ENCODE measurements at regions of chr19 and their contacts with region 1.

Region 1: DNA sequence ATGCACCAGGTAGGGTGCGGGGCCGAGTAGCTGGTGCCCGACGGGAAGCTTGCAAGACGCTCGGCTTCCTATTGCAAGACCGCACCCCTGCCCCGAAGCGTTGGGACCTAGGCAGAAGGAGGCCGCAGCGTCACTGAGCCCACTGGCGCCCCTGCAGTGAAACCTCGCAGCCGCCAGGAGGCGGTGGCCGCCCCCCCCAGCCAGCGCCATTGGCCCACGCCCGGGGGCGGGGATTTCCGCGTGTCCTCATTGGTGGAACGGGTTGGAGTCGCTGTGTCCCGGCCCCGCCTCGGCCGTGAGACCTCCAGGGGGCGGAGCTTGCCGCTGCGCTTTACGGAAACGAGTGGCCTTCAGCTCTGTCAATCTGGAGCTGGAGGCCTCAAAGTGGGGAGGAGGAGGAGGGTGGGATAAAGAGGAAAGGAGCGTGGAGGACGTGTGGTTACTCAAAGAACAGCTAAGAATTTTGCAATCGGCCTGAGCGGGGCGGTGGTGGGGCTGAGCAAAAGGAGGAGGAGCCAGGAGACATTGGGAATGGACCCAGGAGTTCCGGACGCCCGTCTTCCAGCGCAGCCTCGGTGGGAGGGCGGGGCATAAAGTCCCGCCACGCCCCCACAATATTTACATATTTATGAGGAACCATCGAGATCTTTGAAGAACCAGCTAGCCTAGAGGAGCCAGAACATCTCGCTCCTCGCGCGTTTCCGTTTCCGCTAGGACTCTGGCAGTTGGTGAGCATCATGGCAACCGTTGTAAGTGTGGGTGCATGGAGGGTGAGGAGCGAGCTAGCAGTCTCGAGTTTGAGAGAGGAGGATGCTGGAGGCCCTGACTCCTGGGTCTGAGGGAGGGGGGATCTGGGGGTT is at the starts of genes GYS1 and RUVBL2:
- DNase-seq: peak; percentile 96 to 100 (median 99)
- ATAC-seq: peak; percentile 95
- H3K4me3 ChIP-seq: peak within 1 kb of the TSS; percentile 70
- H3K4me3 Mint-ChIP-seq: peak within 1 kb of the TSS; percentile 95 to 100 (median 96)
- H3K27ac ChIP-seq: peak within 1 kb of the TSS; percentile 80
- H3K27ac Mint-ChIP-seq: peak within 1 kb of the TSS; percentile 89 to 99 (median 97)
- H3K4me1 ChIP-seq: peaks cover 23 to 24% of the 10 kb centered on the region in 2 donors
- H3K4me1 Mint-ChIP-seq: peaks cover 40 to 59% (median 46%) of the 10 kb centered on the region in 7 donors
- H3K27me3 ChIP-seq: no peaks in the 10 kb centered on the region
- H3K27me3 Mint-ChIP-seq: no peaks in the 10 kb centered on the region
- total RNA-seq, gene GYS1: 27.3 to 82.3 (median 50.7) TPM
- total RNA-seq, gene RUVBL2: 23.4 to 94.0 (median 24.1) TPM

Region 2: DNA sequence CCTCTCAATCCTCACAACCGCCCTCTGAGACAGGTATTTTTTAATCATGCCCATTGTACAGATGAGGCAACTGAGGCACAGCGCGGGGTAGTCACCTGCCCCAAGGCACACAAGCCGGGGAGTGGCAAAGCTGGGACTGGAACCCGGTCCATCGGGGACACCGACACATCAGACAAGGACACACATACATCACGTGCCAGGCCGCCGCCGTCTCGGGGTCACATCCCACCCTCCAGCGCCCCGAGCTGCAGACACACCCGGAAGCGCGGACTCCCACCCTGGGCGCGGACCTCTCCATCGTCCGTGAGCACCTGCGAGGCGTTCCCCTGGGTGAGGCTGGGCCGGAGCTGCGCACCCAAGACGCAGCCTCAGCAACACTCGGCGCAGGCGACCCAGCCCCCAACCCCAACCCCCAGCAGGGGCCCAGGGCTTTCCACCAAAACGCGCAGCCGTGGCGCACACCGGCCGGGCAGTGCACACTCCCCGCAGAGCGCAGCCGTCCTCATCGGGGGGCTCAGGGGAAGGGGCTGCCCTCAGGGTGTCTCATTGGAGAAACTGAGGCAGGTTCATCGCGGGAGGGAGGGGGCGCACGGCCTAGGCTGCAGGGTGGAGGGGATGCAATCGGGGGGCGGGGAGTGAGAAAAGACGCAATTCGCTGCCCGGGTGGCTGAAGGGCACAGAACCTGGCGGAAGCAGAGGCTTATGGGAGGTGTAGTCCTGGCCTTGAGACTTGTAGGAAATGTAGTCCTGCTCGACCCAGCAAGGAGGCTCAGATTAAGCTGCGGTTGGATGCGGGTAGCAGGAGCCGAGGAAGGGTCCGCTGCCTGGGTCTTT is 479.9 kb before region 1 on chr19:
- CTCF ChIA-PET with region 1: no interaction called
- POLR2A ChIA-PET with region 1: no interaction called
- intact Hi-C with region 1: loop called in 1 of 2 experiments (anchors 2 kb)
- DNase-seq: peak in 8 of 9 donors; percentile 69 to 84 (median 78)
- ATAC-seq: peak; percentile 77
- H3K4me3 ChIP-seq: peak overlapping the region; percentile 72
- H3K4me3 Mint-ChIP-seq: no peak overlapping the region
- H3K27ac ChIP-seq: peak overlapping the region; percentile 82
- H3K27ac Mint-ChIP-seq: peak overlapping the region in 3 of 9 donors; percentile 68 to 91 (median 90)
- H3K4me1 ChIP-seq: peaks cover 21 to 22% of the 10 kb centered on the region in 2 donors
- H3K4me1 Mint-ChIP-seq: peaks cover 11 to 18% (median 13%) of the 10 kb centered on the region in 7 donors
- H3K27me3 ChIP-seq: no peaks in the 10 kb centered on the region
- H3K27me3 Mint-ChIP-seq: no peaks in the 10 kb centered on the region

Region 3: GRCh38 chr19:48872182-48872883 is 121.1 kb before region 1 on chr19 and contains the start of gene PPP1R15A:
- CTCF ChIA-PET with region 1: no interaction called
- POLR2A ChIA-PET with region 1: interaction called, 12 read pairs
- intact Hi-C with region 1: loop called (anchors 1 kb)
- DNase-seq: peak; percentile 96 to 99 (median 98)
- ATAC-seq: peak; percentile 58
- H3K4me3 ChIP-seq: peak within 1 kb of the TSS; percentile 86
- H3K4me3 Mint-ChIP-seq: peak within 1 kb of the TSS; percentile 94 to 100 (median 98)
- H3K27ac ChIP-seq: peak within 1 kb of the TSS; percentile 99
- H3K27ac Mint-ChIP-seq: peak within 1 kb of the TSS; percentile 94 to 100 (median 99)
- H3K4me1 ChIP-seq: peaks cover 34 to 36% of the 10 kb centered on the region in 2 donors
- H3K4me1 Mint-ChIP-seq: peaks cover 31 to 51% (median 41%) of the 10 kb centered on the region in 7 donors
- H3K27me3 ChIP-seq: no peaks in the 10 kb centered on the region
- H3K27me3 Mint-ChIP-seq: peaks cover 0 to 14% (median 0%) of the 10 kb centered on the region in 5 donors
- total RNA-seq, gene PPP1R15A: 31.5 to 1,030 (median 71.9) TPM

Region 4: GRCh38 chr19:49017666-49018351 is 24.4 kb after region 1 on chr19:
- CTCF ChIA-PET with region 1: interaction called, 4 read pairs
- POLR2A ChIA-PET with region 1: interaction called, 10 read pairs
- intact Hi-C with region 1: loop called (anchors 2 kb)
- DNase-seq: peak; percentile 49 to 71 (median 67)
- ATAC-seq: peak; percentile 91
- H3K4me3 ChIP-seq: peak overlapping the region; percentile 76
- H3K4me3 Mint-ChIP-seq: peak overlapping the region; percentile 78 to 95 (median 90)
- H3K27ac ChIP-seq: peak overlapping the region; percentile 48
- H3K27ac Mint-ChIP-seq: peak overlapping the region in 3 of 9 donors; percentile 28 to 45 (median 42)
- H3K4me1 ChIP-seq: peaks cover 0 to 4% of the 10 kb centered on the region in 2 donors
- H3K4me1 Mint-ChIP-seq: peaks cover 7 to 22% (median 18%) of the 10 kb centered on the region in 7 donors
- H3K27me3 ChIP-seq: no peaks in the 10 kb centered on the region
- H3K27me3 Mint-ChIP-seq: peaks cover 0 to 22% (median 0%) of the 10 kb centered on the region in 5 donors

Region 5: DNA sequence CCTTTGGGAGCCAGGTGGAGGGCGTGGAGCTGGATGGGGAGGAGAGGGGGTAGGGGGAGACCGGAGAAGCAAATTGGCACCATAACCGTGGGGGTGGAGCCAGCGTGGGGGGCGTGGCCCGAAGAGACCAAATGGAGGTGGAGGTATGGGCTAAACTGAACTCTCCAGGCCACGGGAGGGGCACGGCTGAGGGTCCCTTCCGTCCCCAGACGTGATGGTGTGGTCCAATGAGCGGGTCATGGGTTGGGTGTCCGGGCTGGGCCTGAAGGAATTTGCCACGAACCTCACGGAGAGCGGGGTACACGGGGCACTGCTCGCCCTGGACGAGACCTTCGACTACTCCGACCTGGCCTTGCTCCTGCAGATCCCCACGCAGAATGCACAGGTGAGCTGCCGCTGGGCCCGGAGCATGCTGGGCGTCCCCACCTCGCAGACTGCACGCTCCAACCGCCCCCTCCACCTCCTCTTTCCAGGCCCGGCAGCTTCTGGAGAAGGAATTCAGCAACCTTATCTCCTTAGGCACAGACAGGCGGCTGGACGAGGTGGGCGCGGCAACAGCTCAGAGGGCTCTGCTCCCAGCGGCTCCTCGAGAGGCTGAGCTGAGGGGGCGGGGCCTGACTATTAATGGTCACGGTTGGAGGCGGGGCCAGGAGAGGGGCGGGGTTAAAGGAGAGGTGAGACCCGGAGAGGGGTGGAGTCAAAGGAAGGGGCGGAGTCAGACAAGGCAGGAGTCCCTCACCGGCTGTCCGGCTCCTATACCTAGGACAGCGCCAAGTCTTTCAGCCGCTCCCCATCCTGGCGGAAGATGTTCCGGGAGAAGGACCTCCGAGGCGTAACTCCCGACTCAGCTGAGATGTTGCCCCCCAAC is 155.6 kb after region 1 on chr19:
- CTCF ChIA-PET with region 1: interaction called, 6 read pairs
- POLR2A ChIA-PET with region 1: no interaction called
- intact Hi-C with region 1: loop called (anchors 1 to 5 kb)
- DNase-seq: peak; percentile 39 to 83 (median 59)
- ATAC-seq: peak; percentile 75
- H3K4me3 ChIP-seq: peak overlapping the region; percentile 52
- H3K4me3 Mint-ChIP-seq: peak overlapping the region; percentile 32 to 88 (median 76)
- H3K27ac ChIP-seq: no peak overlapping the region
- H3K27ac Mint-ChIP-seq: no peak overlapping the region
- H3K4me1 ChIP-seq: peaks cover 8 to 35% of the 10 kb centered on the region in 2 donors
- H3K4me1 Mint-ChIP-seq: peaks cover 16 to 43% (median 35%) of the 10 kb centered on the region in 7 donors
- H3K27me3 ChIP-seq: peaks cover 8 to 29% of the 10 kb centered on the region in 2 donors
- H3K27me3 Mint-ChIP-seq: peaks cover 59 to 71% (median 61%) of the 10 kb centered on the region in 5 donors

Region 6: DNA sequence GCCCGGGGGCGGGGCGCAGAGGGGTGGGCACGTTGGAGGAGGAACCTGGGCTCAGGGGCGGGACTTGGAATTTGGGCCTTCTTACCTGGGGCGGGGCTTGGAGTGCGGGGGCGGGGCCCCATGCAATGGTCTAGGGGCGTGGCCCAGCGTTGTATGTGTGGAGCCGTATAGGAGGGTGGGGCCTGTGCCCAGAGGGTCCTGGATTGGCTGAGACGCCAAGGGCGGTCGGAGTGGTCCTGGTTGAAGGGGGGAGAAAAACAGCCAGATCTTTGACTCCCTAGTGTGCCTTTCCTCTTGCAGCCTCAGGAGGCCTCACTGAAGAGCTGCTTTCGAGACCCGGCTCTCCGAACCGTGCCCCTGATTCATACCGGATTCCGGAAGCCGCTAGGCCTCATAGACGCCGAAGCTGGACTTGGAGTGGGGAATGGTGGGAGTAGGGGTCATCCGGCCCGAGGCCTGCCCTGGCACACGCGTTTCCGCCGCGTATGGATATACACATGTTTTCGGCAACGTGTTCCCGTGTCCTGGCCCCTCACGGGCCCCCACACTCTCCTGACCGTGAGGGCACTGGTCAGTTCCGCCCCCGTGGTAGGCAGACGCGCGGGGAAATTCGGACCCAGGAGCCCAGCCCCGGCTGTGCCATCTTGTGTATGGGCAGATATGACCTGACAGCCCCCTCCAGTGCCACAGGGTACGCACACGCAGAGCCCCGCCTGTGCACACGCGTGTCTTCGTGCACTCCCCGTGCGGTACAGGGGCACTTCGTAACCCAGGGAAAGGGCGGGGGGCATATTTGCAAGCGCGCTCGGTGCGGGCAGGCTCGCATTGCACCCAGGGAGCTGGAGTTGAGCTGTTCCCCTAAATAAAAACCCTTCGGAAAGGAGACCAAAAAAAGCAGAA is 596.9 kb after region 1 on chr19:
- CTCF ChIA-PET with region 1: no interaction called
- POLR2A ChIA-PET with region 1: no interaction called
- intact Hi-C with region 1: loop called in 1 of 2 experiments (anchors 5 kb)
- DNase-seq: peak; percentile 85 to 98 (median 97)
- ATAC-seq: peak; percentile 90
- H3K4me3 ChIP-seq: peak overlapping the region; percentile 97
- H3K4me3 Mint-ChIP-seq: peak overlapping the region; percentile 85 to 95 (median 94)
- H3K27ac ChIP-seq: peak overlapping the region; percentile 86
- H3K27ac Mint-ChIP-seq: peak overlapping the region; percentile 76 to 95 (median 93)
- H3K4me1 ChIP-seq: peaks cover 15 to 18% of the 10 kb centered on the region in 2 donors
- H3K4me1 Mint-ChIP-seq: peaks cover 26 to 42% (median 31%) of the 10 kb centered on the region in 7 donors
- H3K27me3 ChIP-seq: no peaks in the 10 kb centered on the region
- H3K27me3 Mint-ChIP-seq: peaks cover 0 to 12% (median 0%) of the 10 kb centered on the region in 5 donors

Region 7: GRCh38 chr19:50511068-50511822 is 1517.8 kb after region 1 on chr19 and contains the start of gene JOSD2:
- CTCF ChIA-PET with region 1: no interaction called
- POLR2A ChIA-PET with region 1: no interaction called
- intact Hi-C with region 1: loop called in 1 of 2 experiments (anchors 5 kb)
- DNase-seq: peak; percentile 89 to 99 (median 96)
- ATAC-seq: peak; percentile 94
- H3K4me3 ChIP-seq: peak within 1 kb of the TSS; percentile 75
- H3K4me3 Mint-ChIP-seq: peak within 1 kb of the TSS; percentile 75 to 97 (median 88)
- H3K27ac ChIP-seq: peak within 1 kb of the TSS; percentile 86
- H3K27ac Mint-ChIP-seq: peak within 1 kb of the TSS; percentile 87 to 99 (median 97)
- H3K4me1 ChIP-seq: peaks cover 7 to 16% of the 10 kb centered on the region in 2 donors
- H3K4me1 Mint-ChIP-seq: peaks cover 0 to 27% (median 19%) of the 10 kb centered on the region in 7 donors
- H3K27me3 ChIP-seq: no peaks in the 10 kb centered on the region
- H3K27me3 Mint-ChIP-seq: peaks cover 0 to 16% (median 6%) of the 10 kb centered on the region in 5 donors
- total RNA-seq, gene JOSD2: 13.0 to 45.9 (median 22.7) TPM

Measured in naive thymus-derived CD4-positive, alpha-beta T cell (primary cell).